ENCODE measurements at regions of chr5 and their contacts with region 1.

Region 1: DNA sequence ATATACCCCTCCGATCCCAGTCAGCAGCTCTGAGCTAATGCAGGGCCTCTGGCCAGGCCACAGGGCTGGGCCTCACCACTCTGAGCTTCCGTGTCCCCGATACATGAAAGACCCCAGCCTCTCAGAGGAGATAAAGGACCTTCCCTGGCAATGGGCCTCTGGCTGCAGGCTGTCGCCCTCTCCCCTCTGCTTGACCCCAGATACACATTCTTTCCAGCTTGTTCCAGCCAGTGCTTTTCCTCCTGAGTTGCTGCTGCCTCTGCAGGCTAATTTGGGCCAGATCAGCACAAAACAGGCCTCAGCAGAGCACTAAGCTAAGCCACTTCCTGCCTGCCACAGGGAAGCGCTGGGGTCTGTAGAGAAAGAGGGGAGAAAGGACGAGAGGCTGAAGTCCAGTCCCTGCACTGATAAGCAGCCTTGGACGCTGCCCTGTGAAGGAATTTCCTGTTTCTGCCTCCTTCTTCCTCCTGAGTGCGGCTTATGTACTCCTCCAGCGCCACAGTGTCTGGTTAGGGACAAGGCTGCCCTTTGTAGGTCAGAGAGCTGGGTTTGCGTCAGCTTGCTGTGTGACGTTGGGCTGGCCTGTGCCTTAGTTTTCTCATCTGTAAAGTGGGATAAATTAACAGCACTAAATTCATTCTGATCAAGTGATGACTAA is 73.0 kb upstream of the IL17B start:
- DNase-seq: no peak
- H3K4me3 ChIP-seq: no peak overlapping the region
- H3K27ac ChIP-seq: peak overlapping the region; percentile 88 to 90 (median 88)
- H3K4me1 ChIP-seq: peaks cover 86 to 96% (median 91%) of the 10 kb centered on the region in 4 donors
- H3K27me3 ChIP-seq: no peaks in the 10 kb centered on the region
- CTCF ChIP-seq: no peak
- EP300 ChIP-seq: no peak
- POLR2A ChIP-seq: no peak

Region 2: DNA sequence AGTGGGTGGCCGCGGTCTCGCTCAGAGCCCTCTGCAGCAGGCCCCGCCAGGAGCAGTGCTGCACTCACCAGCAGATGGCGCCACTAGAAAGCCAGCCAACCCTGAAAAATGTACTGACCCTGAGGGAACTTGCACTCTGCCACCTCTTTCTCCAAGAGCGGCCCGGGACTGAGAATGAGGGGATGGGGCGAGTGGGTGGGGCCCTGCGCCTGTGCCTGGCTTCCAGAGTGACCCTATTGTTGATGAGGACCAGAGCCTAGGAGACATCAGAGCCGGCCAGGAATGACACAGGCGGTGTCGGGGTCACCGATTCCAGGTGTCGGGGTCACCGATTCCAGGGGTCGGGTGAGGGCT is 70.2 kb before region 1 on chr5:
- intact Hi-C with region 1: no loop called
- DNase-seq: peak; percentile 95
- H3K4me3 ChIP-seq: peak overlapping the region; percentile 47 to 61 (median 52)
- H3K27ac ChIP-seq: peak overlapping the region; percentile 92 to 97 (median 96)
- H3K4me1 ChIP-seq: peaks cover 60 to 94% (median 89%) of the 10 kb centered on the region in 4 donors
- H3K27me3 ChIP-seq: no peaks in the 10 kb centered on the region
- CTCF ChIP-seq: peak; percentile 92 to 98 (median 97)
- EP300 ChIP-seq: no peak
- POLR2A ChIP-seq: no peak

Region 3: GRCh38 chr5:149485655-149486425 is 33.7 kb after region 1 on chr5:
- intact Hi-C with region 1: loop called (anchors 5 kb)
- DNase-seq: peak; percentile 98
- H3K4me3 ChIP-seq: no peak overlapping the region
- H3K27ac ChIP-seq: peak overlapping the region; percentile 86 to 93 (median 90)
- H3K4me1 ChIP-seq: peaks cover 56 to 100% (median 95%) of the 10 kb centered on the region in 4 donors
- H3K27me3 ChIP-seq: no peaks in the 10 kb centered on the region
- CTCF ChIP-seq: peak in 1 of 3 experiments; percentile 9
- EP300 ChIP-seq: peak; percentile 98
- POLR2A ChIP-seq: no peak

Region 4: DNA sequence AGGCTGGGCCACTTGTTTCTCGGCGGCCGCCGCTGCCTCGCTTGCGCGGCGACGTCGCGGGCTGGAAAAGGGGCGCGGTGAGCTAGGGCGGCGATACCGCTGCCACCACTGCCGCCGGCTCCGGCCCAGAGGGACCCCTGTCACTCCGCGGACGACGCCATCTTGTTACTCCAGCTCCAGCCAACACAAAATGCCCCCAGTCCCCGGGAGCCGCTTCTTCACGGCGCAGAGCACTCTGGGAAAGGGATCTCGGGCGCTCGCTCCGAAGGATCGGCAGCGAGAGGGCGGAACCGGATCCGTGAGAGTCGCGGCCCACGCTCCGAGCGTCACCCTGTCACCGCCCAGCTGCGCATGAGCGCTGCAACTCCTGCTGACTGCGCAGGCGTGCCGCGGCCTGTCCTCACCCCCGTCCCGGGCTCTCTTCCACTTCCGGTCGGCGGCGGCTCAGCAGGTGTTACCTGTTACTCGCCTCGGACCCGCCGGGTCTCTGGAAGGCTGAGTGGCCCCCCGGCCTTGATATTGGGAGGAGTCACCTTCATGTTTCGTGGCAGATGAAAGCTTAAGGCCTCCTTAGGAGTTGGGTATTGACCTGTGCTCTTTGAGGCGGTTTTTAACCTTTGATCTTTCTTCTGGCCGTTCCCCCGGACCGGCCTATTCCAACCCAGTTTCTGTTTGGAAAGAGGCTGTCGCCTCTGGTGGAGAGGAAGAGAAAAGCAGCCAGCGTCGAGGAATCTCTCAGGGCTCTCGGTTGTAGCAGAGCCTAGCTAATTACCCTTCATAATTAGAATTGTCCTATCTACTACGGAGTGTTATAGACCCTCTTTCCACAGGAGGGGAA is 99.3 kb after region 1 on chr5 and contains the start of gene CSNK1A1:
- intact Hi-C with region 1: loop called (anchors 1 kb)
- DNase-seq: peak; percentile 99
- H3K4me3 ChIP-seq: peak within 1 kb of the TSS; percentile 84 to 97 (median 95)
- H3K27ac ChIP-seq: peak within 1 kb of the TSS; percentile 99
- H3K4me1 ChIP-seq: peaks cover 27 to 38% (median 32%) of the 10 kb centered on the region in 4 donors
- H3K27me3 ChIP-seq: no peaks in the 10 kb centered on the region
- CTCF ChIP-seq: peak; percentile 89 to 90 (median 89)
- EP300 ChIP-seq: no peak
- POLR2A ChIP-seq: peak; percentile 77
- total RNA-seq, gene CSNK1A1: 283 to 347 (median 336) TPM

Measured in esophagus muscularis mucosa (tissue), 4 donors.